ENCODE measurements at regions of chr7 and their contacts with region 1.

Region 1: GRCh38 chr7:99789441-99790070 is 5.6 kb upstream of the CYP3A4 start:
- DNase-seq: peak; percentile 36
- ATAC-seq: peak; percentile 53
- H3K4me3 Mint-ChIP-seq: no peak overlapping the region
- H3K27ac Mint-ChIP-seq: peak overlapping the region; percentile 84
- H3K4me1 Mint-ChIP-seq: peaks cover 37% of the 10 kb centered on the region
- H3K27me3 Mint-ChIP-seq: peaks cover 3% of the 10 kb centered on the region

Region 2: GRCh38 chr7:99408379-99409191 is 381.0 kb before region 1 on chr7 and contains the starts of genes BUD31 and PDAP1:
- CTCF ChIA-PET with region 1: no interaction called
- POLR2A ChIA-PET with region 1: no interaction called
- intact Hi-C with region 1: no loop called
- DNase-seq: peak; percentile 94
- ATAC-seq: peak; percentile 89
- H3K4me3 Mint-ChIP-seq: peak within 1 kb of the TSS; percentile 90
- H3K27ac Mint-ChIP-seq: peak within 1 kb of the TSS; percentile 96
- H3K4me1 Mint-ChIP-seq: peaks cover 40% of the 10 kb centered on the region
- H3K27me3 Mint-ChIP-seq: no peaks in the 10 kb centered on the region
- total RNA-seq, gene BUD31: 140 to 190 TPM
- total RNA-seq, gene PDAP1: 171 TPM

Region 3: GRCh38 chr7:99624484-99624883 is 165.1 kb before region 1 on chr7:
- CTCF ChIA-PET with region 1: no interaction called
- POLR2A ChIA-PET with region 1: interaction called, 3 read pairs
- intact Hi-C with region 1: loop called in 1 of 2 experiments (anchors 5 kb)
- DNase-seq: peak; percentile 89
- ATAC-seq: peak; percentile 76
- H3K4me3 Mint-ChIP-seq: peak overlapping the region; percentile 88
- H3K27ac Mint-ChIP-seq: peak overlapping the region; percentile 98
- H3K4me1 Mint-ChIP-seq: peaks cover 67% of the 10 kb centered on the region
- H3K27me3 Mint-ChIP-seq: no peaks in the 10 kb centered on the region

Region 4: DNA sequence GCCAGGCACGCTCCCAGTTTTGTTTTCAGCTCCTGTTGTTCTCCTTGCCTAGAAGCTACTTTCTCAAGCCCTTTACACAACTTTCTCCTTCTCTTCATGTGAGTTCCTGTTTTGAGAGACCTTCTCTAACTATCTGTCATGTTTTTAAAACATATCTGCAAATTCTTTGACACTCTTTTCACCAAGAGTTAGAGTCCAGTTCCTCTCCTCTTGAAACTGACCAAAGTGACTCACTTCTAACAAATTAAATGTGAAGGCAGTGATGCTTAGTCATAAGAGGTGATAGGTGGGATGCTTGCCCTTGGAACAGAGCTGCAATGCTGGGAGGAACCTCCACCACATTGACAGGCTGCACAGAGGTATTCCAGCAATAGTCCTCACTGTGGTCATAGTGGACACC is 147.5 kb before region 1 on chr7:
- CTCF ChIA-PET with region 1: no interaction called
- POLR2A ChIA-PET with region 1: no interaction called
- intact Hi-C with region 1: loop called in 1 of 2 experiments (anchors 1 kb)
- DNase-seq: no peak
- ATAC-seq: peak; percentile 13
- H3K4me3 Mint-ChIP-seq: no peak overlapping the region
- H3K27ac Mint-ChIP-seq: peak overlapping the region; percentile 76
- H3K4me1 Mint-ChIP-seq: peaks cover 57% of the 10 kb centered on the region
- H3K27me3 Mint-ChIP-seq: no peaks in the 10 kb centered on the region

Region 5: GRCh38 chr7:100022665-100023064 is 233.1 kb after region 1 on chr7:
- CTCF ChIA-PET with region 1: no interaction called
- POLR2A ChIA-PET with region 1: no interaction called
- intact Hi-C with region 1: no loop called
- DNase-seq: no peak
- ATAC-seq: no peak
- H3K4me3 Mint-ChIP-seq: no peak overlapping the region
- H3K27ac Mint-ChIP-seq: peak overlapping the region; percentile 67
- H3K4me1 Mint-ChIP-seq: peaks cover 58% of the 10 kb centered on the region
- H3K27me3 Mint-ChIP-seq: no peaks in the 10 kb centered on the region